ENCODE measurements at regions of chr7 and their contacts with region 1.

Region 1: GRCh38 chr7:7424151-7424873 is 111.4 kb downstream of the COL28A1 start:
- DNase-seq: peak; percentile 85
- H3K4me3 Mint-ChIP-seq: peak overlapping the region; percentile 52
- H3K27ac Mint-ChIP-seq: no peak overlapping the region
- H3K4me1 Mint-ChIP-seq: peaks cover 20% of the 10 kb centered on the region
- H3K27me3 Mint-ChIP-seq: no peaks in the 10 kb centered on the region
- CTCF ChIP-seq: peak; percentile 89

Region 2: GRCh38 chr7:7438851-7439250 is 14.5 kb after region 1 on chr7:
- CTCF ChIA-PET with region 1: interaction called, 26 read pairs
- POLR2A ChIA-PET with region 1: interaction called, 16 read pairs
- intact Hi-C with region 1: no loop called
- DNase-seq: peak; percentile 95
- H3K4me3 Mint-ChIP-seq: peak overlapping the region; percentile 36
- H3K27ac Mint-ChIP-seq: peak overlapping the region; percentile 88
- H3K4me1 Mint-ChIP-seq: peaks cover 13% of the 10 kb centered on the region
- H3K27me3 Mint-ChIP-seq: no peaks in the 10 kb centered on the region
- CTCF ChIP-seq: no peak

Region 3: DNA sequence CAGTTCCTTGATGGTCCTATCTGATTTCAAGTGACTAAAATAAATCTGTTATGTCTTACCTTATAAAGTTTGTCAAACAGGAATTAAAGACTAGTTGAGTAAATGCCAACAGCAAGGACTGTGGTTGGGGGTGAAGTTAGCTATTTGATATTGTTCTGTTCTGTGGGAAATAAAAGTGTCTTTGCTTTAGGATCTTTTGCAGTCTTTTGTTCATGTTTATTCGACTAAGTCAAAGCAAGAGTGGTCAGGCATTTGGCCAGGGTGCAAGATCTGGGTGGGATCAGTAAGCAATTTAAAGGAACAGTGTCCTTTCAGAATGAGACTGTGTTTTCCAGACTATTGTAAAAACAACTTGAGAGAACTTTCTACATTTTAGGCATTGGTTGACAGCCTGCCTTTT is 111.4 kb after region 1 on chr7 and contains the start of gene COL28A1:
- CTCF ChIA-PET with region 1: interaction called, 92 read pairs
- POLR2A ChIA-PET with region 1: interaction called, 18 read pairs
- intact Hi-C with region 1: loop called (anchors 1 kb)
- DNase-seq: no peak
- H3K4me3 Mint-ChIP-seq: peak within 1 kb of the TSS; percentile 16
- H3K27ac Mint-ChIP-seq: no peak within 1 kb of the TSS
- H3K4me1 Mint-ChIP-seq: no peaks in the 10 kb centered on the region
- H3K27me3 Mint-ChIP-seq: no peaks in the 10 kb centered on the region
- CTCF ChIP-seq: no peak
- total RNA-seq, gene COL28A1: 0.29 and 0.96 TPM in 2 replicates

Region 4: GRCh38 chr7:7554021-7554432 is 129.7 kb after region 1 on chr7:
- CTCF ChIA-PET with region 1: interaction called, 18 read pairs
- POLR2A ChIA-PET with region 1: interaction called, 3 read pairs
- intact Hi-C with region 1: no loop called
- DNase-seq: peak; percentile 86
- H3K4me3 Mint-ChIP-seq: peak overlapping the region; percentile 58
- H3K27ac Mint-ChIP-seq: peak overlapping the region; percentile 98
- H3K4me1 Mint-ChIP-seq: peaks cover 44% of the 10 kb centered on the region
- H3K27me3 Mint-ChIP-seq: no peaks in the 10 kb centered on the region
- CTCF ChIP-seq: no peak

Region 5: GRCh38 chr7:7709271-7709670 is 285.0 kb after region 1 on chr7:
- CTCF ChIA-PET with region 1: no interaction called
- POLR2A ChIA-PET with region 1: no interaction called
- intact Hi-C with region 1: no loop called
- DNase-seq: no peak
- H3K4me3 Mint-ChIP-seq: no peak overlapping the region
- H3K27ac Mint-ChIP-seq: no peak overlapping the region
- H3K4me1 Mint-ChIP-seq: peaks cover 15% of the 10 kb centered on the region
- H3K27me3 Mint-ChIP-seq: no peaks in the 10 kb centered on the region
- CTCF ChIP-seq: no peak

Region 6: GRCh38 chr7:8217200-8218068 is 793.1 kb after region 1 on chr7:
- CTCF ChIA-PET with region 1: no interaction called
- POLR2A ChIA-PET with region 1: interaction called, 3 read pairs
- intact Hi-C with region 1: loop called (anchors 1 kb)
- DNase-seq: peak; percentile 64
- H3K4me3 Mint-ChIP-seq: no peak overlapping the region
- H3K27ac Mint-ChIP-seq: no peak overlapping the region
- H3K4me1 Mint-ChIP-seq: peaks cover 5% of the 10 kb centered on the region
- H3K27me3 Mint-ChIP-seq: no peaks in the 10 kb centered on the region
- CTCF ChIP-seq: peak; percentile 65